ENCODE measurements at regions of chr10 and their contacts with region 1.

Region 1: GRCh38 chr10:7400068-7400715 is 10.6 kb downstream of the SFMBT2 start:
- DNase-seq: no peak
- ATAC-seq: peak; percentile 70

Region 2: DNA sequence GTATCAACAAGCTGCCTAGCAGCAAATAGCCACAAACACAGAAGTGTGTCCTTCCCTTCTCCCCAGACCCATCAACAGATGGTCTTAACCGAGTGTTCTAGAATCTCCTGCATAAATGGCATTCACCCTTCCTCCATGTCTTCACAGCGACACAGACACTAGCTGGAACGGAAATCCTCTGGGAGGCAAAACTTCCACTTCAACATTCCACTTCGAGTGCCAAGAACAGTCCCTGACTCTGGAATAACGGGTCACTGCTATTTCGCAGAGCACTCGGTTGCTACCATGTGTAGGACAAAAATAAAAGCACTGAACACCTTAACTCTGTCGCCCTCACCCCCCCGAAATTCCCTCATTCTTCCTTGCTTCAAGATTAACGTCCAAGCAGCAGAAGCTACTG is 54.5 kb before region 1 on chr10:
- intact Hi-C with region 1: loop called (anchors 2 kb)
- DNase-seq: no peak
- ATAC-seq: peak; percentile 88

Region 3: DNA sequence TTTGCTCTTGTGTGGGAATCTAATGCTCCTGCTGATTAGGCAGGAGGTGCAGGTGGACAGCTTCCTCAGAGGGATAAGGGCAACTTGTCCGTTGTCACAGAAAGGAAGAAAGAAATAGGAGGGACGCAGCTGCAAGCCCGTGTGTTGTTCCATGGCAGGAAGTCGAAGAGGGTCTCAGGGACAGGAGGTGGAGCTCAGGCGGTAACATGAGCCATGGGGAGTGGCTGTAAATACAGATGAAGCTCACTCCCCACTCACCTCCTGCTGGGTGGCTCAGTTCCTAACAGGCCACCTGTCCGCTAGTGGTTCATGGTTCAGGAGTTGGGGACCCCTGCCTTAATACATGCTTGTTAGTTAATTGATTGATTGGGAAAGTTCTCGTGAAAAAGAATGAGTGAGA is 112.3 kb after region 1 on chr10:
- intact Hi-C with region 1: no loop called
- DNase-seq: no peak
- ATAC-seq: no peak